A549 (cell line): ENCODE measurements at regions of chr16 and their contacts with region 1.

Region 1: DNA sequence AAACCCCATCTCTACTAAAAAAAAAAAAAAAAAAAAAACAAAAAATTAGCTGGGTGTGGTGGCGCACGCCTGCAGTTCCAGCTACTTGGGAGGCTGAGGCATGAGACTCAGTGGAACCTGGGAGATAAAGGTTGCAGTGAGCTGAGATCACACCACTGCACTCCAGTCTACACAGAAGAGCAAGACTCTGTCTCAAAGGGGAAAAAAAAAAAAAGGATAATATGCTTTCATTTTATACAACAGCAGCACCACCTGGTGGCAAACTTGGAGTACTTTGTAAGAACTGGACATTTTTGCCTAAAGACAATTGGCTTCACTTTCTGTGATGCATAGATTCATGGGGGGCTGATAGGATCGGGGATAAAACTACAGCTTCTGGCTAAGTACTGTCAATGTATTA is 8.5 kb downstream of the CHTF8 start:
- DNase-seq: peak; percentile 60 to 78
- ATAC-seq: peak; percentile 59 to 72; a peak in 5 of 6 replicates
- H3K4me3 ChIP-seq: no peak overlapping the region
- H3K27ac ChIP-seq: no peak overlapping the region
- H3K4me1 ChIP-seq: no peaks in the 10 kb centered on the region
- CTCF ChIP-seq: peak; percentile 81
- EP300 ChIP-seq: no peak
- POLR2A ChIP-seq: no peak
- RAD21 ChIP-seq: peak; percentile 90 to 91

Region 2: GRCh38 chr16:68848786-68849185 is 275.1 kb before region 1 on chr16:
- CTCF ChIA-PET with region 1: interaction called, 99 read pairs
- POLR2A ChIA-PET with region 1: no interaction called
- DNase-seq: no peak
- ATAC-seq: no peak
- H3K4me3 ChIP-seq: no peak overlapping the region
- H3K27ac ChIP-seq: no peak overlapping the region
- H3K4me1 ChIP-seq: 0 out of 3 replicates have a peak, but pooled peaks cover 5% of the 10 kb centered on the region
- CTCF ChIP-seq: no peak
- EP300 ChIP-seq: no peak
- POLR2A ChIP-seq: no peak
- RAD21 ChIP-seq: no peak

Region 3: DNA sequence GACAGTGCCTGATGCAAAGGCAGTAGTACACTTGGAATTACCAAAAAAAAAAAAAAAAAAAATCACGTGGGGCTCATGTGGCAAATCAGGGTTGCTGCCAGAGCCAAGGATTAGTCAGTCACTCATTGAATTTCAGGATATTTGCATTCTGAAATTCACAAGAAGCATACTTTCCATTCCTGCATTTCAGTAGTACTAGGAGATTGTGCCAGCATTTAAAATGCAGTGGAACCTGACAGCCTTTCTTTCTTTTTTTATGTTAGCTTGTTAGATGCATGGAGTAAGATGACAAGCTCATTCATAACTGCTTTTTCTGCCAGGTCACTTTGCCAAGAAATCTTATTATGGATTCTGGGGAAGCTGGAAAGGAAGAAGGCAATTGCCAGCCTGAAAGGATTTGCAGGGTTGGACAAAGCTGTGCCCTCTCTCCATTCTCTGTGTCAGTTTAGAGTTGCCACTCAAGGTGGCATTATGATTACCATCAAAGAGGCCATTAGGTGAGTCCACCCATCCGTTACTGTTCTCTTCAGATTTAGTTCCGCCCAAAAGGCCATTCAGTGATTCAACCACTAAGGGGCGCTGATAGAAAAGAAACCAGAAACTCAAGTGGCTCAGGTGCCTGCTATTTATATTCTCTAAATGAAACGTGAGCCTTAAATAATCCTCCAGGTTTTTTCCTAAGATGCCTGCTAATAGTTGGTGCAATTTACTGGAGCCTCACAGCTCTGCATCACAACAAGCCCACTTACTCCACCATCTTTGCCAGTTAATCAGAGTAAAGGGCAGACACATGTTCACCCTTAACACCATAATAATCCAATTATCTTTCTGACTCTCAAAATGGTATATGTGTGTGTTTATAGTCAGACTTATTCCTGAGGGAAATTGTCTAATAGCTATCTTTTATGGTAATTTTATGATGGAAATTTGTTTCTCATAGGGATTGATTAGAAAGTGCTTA is 221.6 kb before region 1 on chr16:
- CTCF ChIA-PET with region 1: interaction called, 503 read pairs
- POLR2A ChIA-PET with region 1: no interaction called
- DNase-seq: peak; percentile 58 to 68
- ATAC-seq: peak; percentile 87 to 91
- H3K4me3 ChIP-seq: no peak overlapping the region
- H3K27ac ChIP-seq: peak overlapping the region in 1 of 2 experiments; percentile 38; a peak in 3 of 6 replicates
- H3K4me1 ChIP-seq: peaks cover 12% of the 10 kb centered on the region
- CTCF ChIP-seq: peak; percentile 96
- EP300 ChIP-seq: no peak
- POLR2A ChIP-seq: no peak
- RAD21 ChIP-seq: peak; percentile 96 to 97

Region 4: GRCh38 chr16:68995011-68995504 is 128.9 kb before region 1 on chr16:
- CTCF ChIA-PET with region 1: interaction called, 10 read pairs
- POLR2A ChIA-PET with region 1: no interaction called
- DNase-seq: peak; percentile 55 to 84
- ATAC-seq: peak; percentile 79 to 84; a peak in 5 of 6 replicates
- H3K4me3 ChIP-seq: no peak overlapping the region
- H3K27ac ChIP-seq: peak overlapping the region; percentile 92
- H3K4me1 ChIP-seq: peaks cover 59% of the 10 kb centered on the region
- CTCF ChIP-seq: peak; percentile 62
- EP300 ChIP-seq: no peak
- POLR2A ChIP-seq: no peak
- RAD21 ChIP-seq: peak; percentile 72 to 78

Region 5: DNA sequence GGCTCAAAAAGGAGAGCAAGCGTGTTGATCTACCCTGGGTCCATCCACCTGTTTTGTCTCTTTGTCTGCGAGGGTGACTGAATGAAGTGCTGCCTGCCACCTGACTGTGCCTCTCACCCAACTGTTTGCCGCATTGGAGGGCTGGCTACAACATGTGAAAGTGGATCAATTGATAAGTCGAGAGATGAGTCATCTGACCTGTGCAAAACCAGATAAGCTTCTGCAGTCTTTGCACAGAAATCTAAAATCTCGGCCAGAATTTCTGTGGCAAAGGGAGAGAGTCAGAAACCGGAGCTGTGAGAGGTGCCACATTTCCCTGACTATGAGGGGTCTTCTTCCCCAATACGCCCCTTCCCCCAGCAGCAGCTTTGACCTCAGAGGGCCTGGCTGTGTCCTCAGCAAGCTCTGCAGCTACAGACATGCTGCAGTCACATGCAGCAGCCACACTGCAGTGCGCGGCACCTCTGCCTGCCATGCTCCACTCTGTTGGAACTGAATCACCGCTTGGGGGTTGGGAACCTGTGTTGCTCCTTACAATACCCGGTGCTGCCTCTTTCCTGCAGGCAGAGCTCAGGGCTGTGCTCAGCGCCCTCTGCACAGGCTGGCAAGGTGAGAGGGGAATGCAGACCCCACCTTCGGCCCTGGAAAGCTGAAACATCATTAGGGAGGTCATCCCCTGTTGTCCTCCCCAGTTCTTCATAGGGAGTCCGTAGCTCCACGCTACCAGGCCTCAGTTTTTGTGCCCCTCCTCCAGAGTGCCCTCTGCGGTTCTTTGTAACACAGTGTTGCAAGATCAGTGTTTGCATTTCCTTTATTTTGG is 34.6 kb before region 1 on chr16:
- CTCF ChIA-PET with region 1: interaction called, 11 read pairs
- POLR2A ChIA-PET with region 1: no interaction called
- DNase-seq: peak in 1 of 2 experiments; percentile 35
- ATAC-seq: peak; percentile 90 to 93
- H3K4me3 ChIP-seq: no peak overlapping the region
- H3K27ac ChIP-seq: peak overlapping the region; percentile 55 to 78
- H3K4me1 ChIP-seq: peaks cover 19% of the 10 kb centered on the region
- CTCF ChIP-seq: no peak
- EP300 ChIP-seq: no peak
- POLR2A ChIP-seq: no peak
- RAD21 ChIP-seq: no peak

Region 6: DNA sequence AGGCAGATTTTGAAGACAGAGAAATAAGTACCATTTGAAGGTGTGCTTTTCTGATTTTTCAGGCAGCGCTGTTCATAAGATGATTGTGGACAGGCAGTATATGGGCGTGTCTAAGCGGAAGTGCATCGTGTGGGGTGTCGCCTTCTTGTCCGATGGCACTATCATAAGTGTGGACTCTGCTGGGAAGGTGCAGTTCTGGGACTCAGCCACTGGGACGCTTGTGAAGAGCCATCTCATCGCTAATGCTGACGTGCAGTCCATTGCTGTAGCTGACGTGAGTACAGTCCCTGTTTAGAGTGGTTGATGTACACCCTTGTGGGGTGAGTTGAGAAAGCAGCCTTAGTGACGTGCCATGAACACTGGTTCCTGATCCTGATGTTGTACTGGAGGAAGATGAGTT is 19.2 kb after region 1 on chr16:
- CTCF ChIA-PET with region 1: no interaction called
- POLR2A ChIA-PET with region 1: no interaction called
- DNase-seq: peak; percentile 40 to 75
- ATAC-seq: peak; percentile 96
- H3K4me3 ChIP-seq: no peak overlapping the region
- H3K27ac ChIP-seq: no peak overlapping the region
- H3K4me1 ChIP-seq: 0 out of 3 replicates have a peak, but pooled peaks cover 3% of the 10 kb centered on the region
- CTCF ChIP-seq: no peak
- EP300 ChIP-seq: no peak
- POLR2A ChIP-seq: no peak
- RAD21 ChIP-seq: no peak

Region 7: DNA sequence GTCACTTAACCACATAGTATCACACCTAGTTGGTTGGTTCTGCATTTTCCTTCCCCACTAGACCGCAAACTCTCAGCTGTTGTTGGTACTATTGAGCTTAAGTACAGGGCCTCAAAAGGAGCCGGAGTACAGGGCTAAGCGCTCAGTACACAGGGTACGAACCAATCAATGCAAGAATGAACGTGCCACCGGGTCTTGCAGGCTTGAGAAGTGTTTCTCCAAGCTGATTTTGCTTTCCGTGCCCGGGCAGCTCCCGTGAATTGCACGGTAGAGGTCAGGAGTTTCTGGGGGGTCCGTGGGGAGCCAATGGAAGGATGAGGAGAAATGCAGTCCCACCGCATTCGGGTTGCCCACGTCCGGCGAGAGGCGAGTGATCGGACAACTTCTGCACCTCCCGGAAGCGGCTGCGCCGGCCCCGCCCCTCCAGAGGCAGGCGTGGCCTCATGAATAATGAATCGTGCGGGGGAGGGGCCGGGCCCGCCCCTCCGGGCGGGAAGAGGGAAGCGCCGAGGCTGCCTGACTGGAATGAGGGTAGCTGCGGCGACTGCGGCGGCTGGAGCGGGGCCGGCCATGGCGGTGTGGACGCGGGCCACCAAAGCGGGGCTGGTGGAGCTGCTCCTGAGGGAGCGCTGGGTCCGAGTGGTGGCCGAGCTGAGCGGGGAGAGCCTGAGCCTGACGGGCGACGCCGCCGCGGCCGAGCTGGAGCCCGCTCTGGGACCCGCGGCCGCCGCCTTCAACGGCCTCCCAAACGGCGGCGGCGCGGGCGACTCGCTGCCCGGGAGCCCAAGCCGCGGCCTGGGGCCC is 62.9 kb after region 1 on chr16 and contains the start of gene SNTB2:
- CTCF ChIA-PET with region 1: no interaction called
- POLR2A ChIA-PET with region 1: no interaction called
- DNase-seq: peak; percentile 87 to 90
- ATAC-seq: peak; percentile 92 to 95
- H3K4me3 ChIP-seq: peak within 1 kb of the TSS; percentile 74
- H3K27ac ChIP-seq: peak within 1 kb of the TSS; percentile 86 to 97
- H3K4me1 ChIP-seq: peaks cover 34% of the 10 kb centered on the region
- CTCF ChIP-seq: no peak
- EP300 ChIP-seq: no peak
- POLR2A ChIP-seq: peak; percentile 93
- RAD21 ChIP-seq: no peak
- polyA plus RNA-seq, gene SNTB2: 19.2 and 20.8 TPM in 2 replicates

Region 8: DNA sequence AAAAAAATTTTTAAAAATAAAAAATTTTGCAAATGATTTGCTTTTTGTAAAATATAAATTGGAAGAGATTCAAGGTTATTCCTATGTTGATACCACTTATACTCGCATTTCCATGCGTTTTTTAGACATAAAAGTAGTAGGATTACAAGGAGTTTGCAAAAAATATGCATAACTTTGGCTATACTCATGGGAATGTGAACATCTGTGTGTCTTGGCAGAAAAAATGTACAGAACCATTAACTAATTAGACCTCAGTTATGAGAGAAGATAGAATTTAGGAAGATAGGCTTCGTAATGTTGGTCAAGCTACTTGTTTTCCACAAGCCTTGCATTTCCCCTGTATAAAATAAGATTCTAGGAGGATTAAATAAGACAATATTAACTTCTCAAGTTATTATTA is 126.2 kb after region 1 on chr16:
- CTCF ChIA-PET with region 1: no interaction called
- POLR2A ChIA-PET with region 1: no interaction called
- DNase-seq: no peak
- ATAC-seq: no peak
- H3K4me3 ChIP-seq: no peak overlapping the region
- H3K27ac ChIP-seq: no peak overlapping the region
- H3K4me1 ChIP-seq: no peaks in the 10 kb centered on the region
- CTCF ChIP-seq: no peak
- EP300 ChIP-seq: no peak
- POLR2A ChIP-seq: no peak
- RAD21 ChIP-seq: no peak